H1 (cell line): ENCODE measurements at regions of chr5 and their contacts with region 1.

Region 1: DNA sequence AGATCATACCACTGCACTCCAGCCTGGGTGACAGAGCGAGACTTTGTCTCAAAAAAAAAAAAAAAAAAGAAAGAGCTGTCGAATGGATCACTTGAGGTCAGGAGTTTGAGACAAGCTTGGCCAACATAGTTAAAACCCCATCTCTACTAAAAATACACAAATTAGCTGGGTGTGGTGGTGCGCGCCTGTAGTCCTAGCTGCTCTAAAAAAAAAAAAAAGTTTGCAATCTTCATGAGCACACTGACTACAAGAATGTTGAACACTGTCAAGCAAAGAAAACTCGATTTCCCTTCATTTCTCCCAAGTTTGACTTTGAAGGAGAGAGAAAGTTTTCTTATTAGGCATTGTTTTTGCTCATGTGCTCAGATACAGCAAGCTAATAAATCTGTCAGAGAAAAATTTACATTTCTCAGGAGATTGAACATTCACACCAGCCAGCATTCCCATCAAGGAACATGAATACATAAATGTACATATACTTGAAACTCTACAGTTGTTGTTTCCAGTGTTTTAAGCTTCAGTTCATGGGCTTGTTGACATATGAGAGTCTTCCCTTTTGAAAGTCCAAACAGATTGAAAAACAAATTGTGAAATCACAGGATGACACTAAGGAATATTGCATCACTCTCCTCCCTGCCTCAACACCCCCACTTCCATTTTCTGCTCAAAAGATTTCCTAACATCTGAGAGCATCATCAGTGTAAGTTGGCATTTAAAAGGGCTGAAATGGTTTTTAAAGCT is 81.8 kb downstream of the ARRDC3 start:
- DNase-seq: no peak
- H3K4me3 ChIP-seq: no peak overlapping the region
- H3K27ac ChIP-seq: no peak overlapping the region
- H3K4me1 ChIP-seq: no peaks in the 10 kb centered on the region
- H3K27me3 ChIP-seq: no peaks in the 10 kb centered on the region
- CTCF ChIP-seq: no peak
- EP300 ChIP-seq: no peak
- POLR2A ChIP-seq: no peak
- RAD21 ChIP-seq: no peak

Region 2: GRCh38 chr5:91311697-91312501 is 10.6 kb after region 1 on chr5:
- CTCF ChIA-PET with region 1: interaction called, 59 read pairs
- POLR2A ChIA-PET with region 1: interaction called, 3 read pairs
- DNase-seq: no peak
- H3K4me3 ChIP-seq: no peak overlapping the region
- H3K27ac ChIP-seq: no peak overlapping the region
- H3K4me1 ChIP-seq: peaks cover 0 to 8% (median 0%) of the 10 kb centered on the region in 4 experiments; a peak in 1 of 7 replicates
- H3K27me3 ChIP-seq: no peaks in the 10 kb centered on the region
- CTCF ChIP-seq: peak in 1 of 3 experiments; percentile 9; a peak in 1 of 4 replicates
- EP300 ChIP-seq: no peak
- POLR2A ChIP-seq: no peak
- RAD21 ChIP-seq: peak in 1 of 2 experiments; percentile 17; a peak in 1 of 4 replicates

Region 3: GRCh38 chr5:91722736-91723467 is 421.6 kb after region 1 on chr5:
- CTCF ChIA-PET with region 1: no interaction called
- POLR2A ChIA-PET with region 1: no interaction called
- DNase-seq: no peak
- H3K4me3 ChIP-seq: no peak overlapping the region
- H3K27ac ChIP-seq: no peak overlapping the region
- H3K4me1 ChIP-seq: peaks cover 0 to 5% (median 0%) of the 10 kb centered on the region in 4 experiments; a peak in 2 of 7 replicates
- H3K27me3 ChIP-seq: no peaks in the 10 kb centered on the region
- CTCF ChIP-seq: no peak
- EP300 ChIP-seq: no peak
- POLR2A ChIP-seq: no peak
- RAD21 ChIP-seq: no peak